H1 (cell line): ENCODE measurements at regions of chr22 and their contacts with region 1.

Region 1: GRCh38 chr22:24555157-24556039 is at the start of gene SNRPD3:
- DNase-seq: peak; percentile 98 to 99
- H3K4me3 ChIP-seq: peak within 1 kb of the TSS; percentile 96 to 100 (median 100)
- H3K27ac ChIP-seq: peak within 1 kb of the TSS; percentile 95
- H3K4me1 ChIP-seq: peaks cover 0 to 16% (median 3%) of the 10 kb centered on the region in 4 experiments; a peak in 6 of 7 replicates
- H3K27me3 ChIP-seq: no peaks in the 10 kb centered on the region; a peak in 1 of 7 replicates
- CTCF ChIP-seq: no peak
- EP300 ChIP-seq: peak in 1 of 2 experiments; percentile 76; a peak in 1 of 3 replicates
- POLR2A ChIP-seq: peak; percentile 56 to 67; a peak in 1 of 3 replicates
- RAD21 ChIP-seq: no peak
- total RNA-seq, gene SNRPD3: 200 TPM in 2 replicates

Region 2: DNA sequence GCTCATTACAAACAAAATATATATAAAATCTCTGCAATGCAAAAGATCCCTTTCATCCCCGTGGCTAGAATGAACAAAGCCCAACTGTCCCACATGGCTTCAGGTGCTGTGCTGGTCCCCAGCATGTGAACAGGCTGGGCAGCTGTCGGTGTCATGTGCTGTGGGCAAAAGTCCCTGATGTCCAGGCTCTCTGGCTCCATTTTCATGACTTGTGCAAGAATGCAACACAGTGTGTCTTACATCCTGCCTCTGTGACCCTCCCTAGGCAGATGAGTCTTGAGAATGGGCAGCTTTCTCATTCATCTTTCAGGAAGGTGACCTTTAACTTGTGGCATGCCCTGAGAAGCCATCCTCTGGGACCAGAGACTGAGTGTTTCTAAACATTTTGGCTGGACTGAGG is 14.9 kb before region 1 on chr22:
- CTCF ChIA-PET with region 1: interaction called, 3 read pairs
- POLR2A ChIA-PET with region 1: interaction called, 13 read pairs
- DNase-seq: no peak
- H3K4me3 ChIP-seq: no peak overlapping the region
- H3K27ac ChIP-seq: no peak overlapping the region
- H3K4me1 ChIP-seq: no peaks in the 10 kb centered on the region
- H3K27me3 ChIP-seq: no peaks in the 10 kb centered on the region; a peak in 1 of 7 replicates
- CTCF ChIP-seq: no peak
- EP300 ChIP-seq: no peak
- POLR2A ChIP-seq: no peak
- RAD21 ChIP-seq: no peak